Activated naive CD8-positive, alpha-beta T cell treated with anti-CD3 and anti-CD28 coated beads, Interleukin-2, amount 10 ng/mL, durations not matched to agents 7 days and 5 days (primary cell): ENCODE measurements at regions of chr2 and their contacts with region 1.

Region 1: DNA sequence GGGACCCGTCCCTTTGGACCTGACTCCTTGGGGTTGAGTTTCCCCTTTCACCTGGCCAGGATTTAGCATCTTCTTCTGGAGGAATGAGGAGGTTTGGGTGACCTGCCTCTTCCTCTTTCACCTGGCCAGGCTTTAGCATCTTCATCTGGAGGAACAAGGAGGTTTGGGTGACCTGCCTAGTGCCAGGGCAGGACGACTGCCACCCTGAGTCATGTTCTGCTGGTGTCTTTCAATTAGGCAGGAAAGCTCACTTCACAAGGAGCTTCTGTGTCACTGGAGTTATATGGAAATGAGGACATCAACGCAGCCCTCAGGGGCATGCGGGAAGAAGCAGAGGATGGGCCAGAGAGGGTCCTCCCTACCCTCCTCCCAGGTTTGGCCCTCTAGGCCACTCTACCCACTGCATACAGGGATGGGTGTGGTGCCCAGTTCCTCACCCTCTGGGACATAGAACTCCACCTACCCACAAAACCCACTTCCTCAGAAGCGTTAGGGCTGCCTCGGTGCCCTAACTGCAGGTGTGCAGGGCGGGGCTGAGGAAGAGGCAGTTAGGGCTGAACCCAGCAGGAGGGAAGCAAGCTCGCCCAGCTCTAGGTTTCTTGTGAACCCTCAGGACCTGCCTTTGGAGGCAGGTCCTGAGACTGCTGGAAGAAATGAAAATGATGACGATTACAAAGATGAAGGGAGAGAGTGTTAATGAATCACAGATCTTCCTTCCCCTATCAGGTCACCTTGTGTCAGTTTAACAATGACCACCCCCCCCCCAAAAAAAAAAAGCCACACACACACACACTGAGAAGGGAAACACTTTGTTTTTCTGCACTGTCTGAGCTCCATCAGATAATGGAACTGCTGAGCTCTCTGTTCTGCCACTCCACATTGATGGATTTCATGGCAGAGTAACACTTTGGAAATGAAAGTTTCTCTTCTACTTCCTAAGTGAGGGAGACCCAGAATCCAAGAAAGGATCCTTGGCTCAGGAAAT is 71.0 kb downstream of the ARL4C start:
- DNase-seq: peak; percentile 72
- ATAC-seq: peak; percentile 78
- H3K4me3 Mint-ChIP-seq: peak overlapping the region; percentile 83
- H3K27ac Mint-ChIP-seq: peak overlapping the region; percentile 100
- H3K4me1 Mint-ChIP-seq: peaks cover 75% of the 10 kb centered on the region
- H3K27me3 Mint-ChIP-seq: no peaks in the 10 kb centered on the region

Region 2: DNA sequence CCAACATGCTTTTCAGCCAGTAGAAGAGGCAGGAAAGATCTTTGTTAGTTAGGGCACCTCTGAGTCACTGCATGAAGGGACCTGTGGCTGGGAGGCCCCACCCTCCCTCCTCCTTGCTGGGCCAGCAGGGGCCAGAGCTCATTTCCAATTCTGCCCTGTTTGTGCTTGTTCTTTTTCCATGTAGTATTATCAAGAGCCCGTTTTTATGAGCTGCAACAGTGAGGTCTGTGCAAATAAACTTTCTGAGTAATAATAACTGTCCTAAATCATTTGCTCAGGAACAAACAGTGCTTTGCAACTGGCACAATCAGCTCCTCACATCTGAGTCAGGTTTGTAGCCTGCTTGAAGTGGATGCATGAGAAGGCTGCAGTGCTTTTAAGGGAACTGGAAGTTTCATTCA is 57.0 kb before region 1 on chr2:
- POLR2A ChIA-PET with region 1: interaction called, 13 read pairs
- DNase-seq: peak; percentile 53
- ATAC-seq: peak; percentile 84
- H3K4me3 Mint-ChIP-seq: peak overlapping the region; percentile 63
- H3K27ac Mint-ChIP-seq: peak overlapping the region; percentile 92
- H3K4me1 Mint-ChIP-seq: peaks cover 70% of the 10 kb centered on the region
- H3K27me3 Mint-ChIP-seq: no peaks in the 10 kb centered on the region

Region 3: GRCh38 chr2:234437642-234438304 is 11.9 kb after region 1 on chr2:
- POLR2A ChIA-PET with region 1: interaction called, 16 read pairs
- DNase-seq: no peak
- ATAC-seq: no peak
- H3K4me3 Mint-ChIP-seq: peak overlapping the region; percentile 52
- H3K27ac Mint-ChIP-seq: peak overlapping the region; percentile 77
- H3K4me1 Mint-ChIP-seq: peaks cover 54% of the 10 kb centered on the region
- H3K27me3 Mint-ChIP-seq: no peaks in the 10 kb centered on the region

Region 4: DNA sequence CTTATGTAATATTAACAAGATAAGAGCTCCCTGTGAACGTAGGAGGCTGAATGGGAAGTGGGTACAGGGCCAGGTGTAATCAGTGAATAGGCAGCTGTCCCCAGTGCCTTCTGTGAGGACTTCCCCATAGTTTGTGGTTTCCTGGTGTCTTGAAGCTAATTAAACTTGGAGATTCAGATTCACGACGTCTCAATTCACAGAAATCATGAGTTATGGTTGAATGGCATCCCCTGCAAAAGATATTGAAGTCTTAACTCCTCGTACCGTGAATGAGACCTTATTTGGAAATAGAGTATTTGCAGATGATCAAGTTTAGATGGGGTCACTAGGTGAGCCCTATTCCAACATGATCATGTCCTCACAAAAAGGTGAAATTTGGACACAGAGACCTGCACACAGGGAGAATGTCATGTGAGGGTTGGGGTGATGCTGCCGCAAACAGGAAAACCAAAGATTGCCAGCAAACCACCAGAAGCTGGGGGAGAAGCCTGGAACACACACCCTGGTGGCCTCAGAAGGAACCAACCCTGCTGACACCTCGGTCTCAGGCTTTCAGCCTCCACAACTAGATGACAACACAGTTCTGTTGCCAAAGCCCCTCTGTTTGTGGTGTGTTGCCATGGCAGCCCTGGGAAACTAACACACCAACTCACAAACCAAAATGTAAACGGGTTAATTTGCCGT is 57.8 kb after region 1 on chr2:
- POLR2A ChIA-PET with region 1: interaction called, 31 read pairs
- DNase-seq: peak; percentile 79
- ATAC-seq: peak; percentile 78
- H3K4me3 Mint-ChIP-seq: peak overlapping the region; percentile 72
- H3K27ac Mint-ChIP-seq: peak overlapping the region; percentile 85
- H3K4me1 Mint-ChIP-seq: peaks cover 57% of the 10 kb centered on the region
- H3K27me3 Mint-ChIP-seq: no peaks in the 10 kb centered on the region

Region 5: DNA sequence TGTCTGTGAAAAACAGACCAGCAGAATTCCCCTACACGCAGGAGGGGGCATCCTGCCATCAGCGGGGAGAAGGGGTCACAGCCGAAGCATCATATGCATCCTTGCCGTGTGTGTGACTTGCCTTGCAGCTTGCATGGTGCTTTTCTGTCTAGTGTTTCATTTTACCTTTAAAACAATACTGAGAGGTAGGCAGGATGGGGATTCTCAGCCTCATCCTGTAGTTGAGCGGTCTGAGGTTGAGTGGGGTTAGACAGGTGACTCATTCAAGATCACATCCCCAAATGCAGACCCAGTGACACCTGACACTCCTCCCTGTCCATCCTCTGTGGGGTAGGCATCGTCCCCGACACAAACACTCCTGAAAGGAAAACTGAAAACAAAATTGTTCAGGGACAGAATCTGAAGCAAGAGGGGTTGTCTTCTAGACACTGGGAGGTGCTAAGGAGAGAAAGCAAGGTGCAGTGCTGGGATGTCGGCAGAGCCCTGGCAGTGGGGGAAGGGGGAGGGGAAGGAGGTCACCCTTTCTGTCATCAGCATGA is 63.1 kb after region 1 on chr2:
- POLR2A ChIA-PET with region 1: interaction called, 149 read pairs
- DNase-seq: peak; percentile 68
- ATAC-seq: peak; percentile 76
- H3K4me3 Mint-ChIP-seq: peak overlapping the region; percentile 97
- H3K27ac Mint-ChIP-seq: peak overlapping the region; percentile 99
- H3K4me1 Mint-ChIP-seq: peaks cover 71% of the 10 kb centered on the region
- H3K27me3 Mint-ChIP-seq: no peaks in the 10 kb centered on the region